Naive thymus-derived CD4-positive, alpha-beta T cell (primary cell): ENCODE measurements at regions of chr11 and their contacts with region 1.

Region 1: DNA sequence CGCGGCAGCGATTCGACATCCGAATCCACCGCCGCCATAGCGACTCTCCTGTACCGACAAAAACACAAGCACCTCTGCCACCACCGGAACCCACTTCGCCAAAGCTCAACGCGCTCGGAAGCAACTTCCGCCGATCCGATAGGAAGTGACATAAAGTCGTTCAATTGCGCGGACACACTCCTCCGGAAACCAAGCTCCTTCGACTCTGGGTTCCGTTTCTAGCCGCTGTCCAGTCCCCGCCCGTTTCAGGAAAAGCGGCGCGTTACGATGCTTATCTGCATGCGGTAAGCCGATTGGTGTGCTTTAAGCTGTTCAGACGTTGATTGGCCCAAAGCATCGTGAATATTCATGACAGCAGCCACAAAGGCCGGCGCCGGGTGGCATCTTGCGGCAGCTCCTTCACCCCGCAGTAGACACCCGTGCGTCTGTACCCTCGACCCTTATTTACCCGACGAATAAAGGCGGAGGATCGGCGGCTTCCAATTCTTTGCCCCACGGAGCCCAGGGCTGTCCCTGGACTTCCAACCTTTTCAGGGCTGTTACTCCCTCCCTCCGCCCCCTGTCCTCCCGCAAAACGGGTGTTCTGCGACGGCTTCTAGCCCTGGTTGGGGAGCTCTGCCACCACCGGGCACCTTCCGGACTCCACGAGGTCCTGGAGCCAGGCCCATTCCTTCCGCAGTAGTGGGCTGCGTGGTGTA is at the start of gene TUT1:
- DNase-seq: peak; percentile 78 to 99 (median 98)
- ATAC-seq: peak; percentile 92
- H3K4me3 ChIP-seq: peak within 1 kb of the TSS; percentile 82
- H3K4me3 Mint-ChIP-seq: peak within 1 kb of the TSS; percentile 87 to 100 (median 96)
- H3K27ac ChIP-seq: peak within 1 kb of the TSS; percentile 94
- H3K27ac Mint-ChIP-seq: peak within 1 kb of the TSS; percentile 92 to 99 (median 96)
- H3K4me1 ChIP-seq: peaks cover 14 to 35% of the 10 kb centered on the region in 2 donors
- H3K4me1 Mint-ChIP-seq: peaks cover 26 to 66% (median 52%) of the 10 kb centered on the region in 7 donors
- H3K27me3 ChIP-seq: no peaks in the 10 kb centered on the region
- H3K27me3 Mint-ChIP-seq: peaks cover 0 to 4% (median 0%) of the 10 kb centered on the region in 5 donors
- total RNA-seq, gene TUT1: 34.5 to 54.6 (median 37.4) TPM

Region 2: GRCh38 chr11:62532096-62532495 is 59.5 kb before region 1 on chr11:
- CTCF ChIA-PET with region 1: no interaction called
- POLR2A ChIA-PET with region 1: no interaction called
- intact Hi-C with region 1: no loop called
- DNase-seq: no peak
- ATAC-seq: no peak
- H3K4me3 ChIP-seq: no peak overlapping the region
- H3K4me3 Mint-ChIP-seq: no peak overlapping the region
- H3K27ac ChIP-seq: no peak overlapping the region
- H3K27ac Mint-ChIP-seq: peak overlapping the region in 1 of 9 donors; percentile 28
- H3K4me1 ChIP-seq: no peaks in the 10 kb centered on the region
- H3K4me1 Mint-ChIP-seq: peaks cover 0 to 11% (median 0%) of the 10 kb centered on the region in 7 donors
- H3K27me3 ChIP-seq: no peaks in the 10 kb centered on the region
- H3K27me3 Mint-ChIP-seq: no peaks in the 10 kb centered on the region

Region 3: DNA sequence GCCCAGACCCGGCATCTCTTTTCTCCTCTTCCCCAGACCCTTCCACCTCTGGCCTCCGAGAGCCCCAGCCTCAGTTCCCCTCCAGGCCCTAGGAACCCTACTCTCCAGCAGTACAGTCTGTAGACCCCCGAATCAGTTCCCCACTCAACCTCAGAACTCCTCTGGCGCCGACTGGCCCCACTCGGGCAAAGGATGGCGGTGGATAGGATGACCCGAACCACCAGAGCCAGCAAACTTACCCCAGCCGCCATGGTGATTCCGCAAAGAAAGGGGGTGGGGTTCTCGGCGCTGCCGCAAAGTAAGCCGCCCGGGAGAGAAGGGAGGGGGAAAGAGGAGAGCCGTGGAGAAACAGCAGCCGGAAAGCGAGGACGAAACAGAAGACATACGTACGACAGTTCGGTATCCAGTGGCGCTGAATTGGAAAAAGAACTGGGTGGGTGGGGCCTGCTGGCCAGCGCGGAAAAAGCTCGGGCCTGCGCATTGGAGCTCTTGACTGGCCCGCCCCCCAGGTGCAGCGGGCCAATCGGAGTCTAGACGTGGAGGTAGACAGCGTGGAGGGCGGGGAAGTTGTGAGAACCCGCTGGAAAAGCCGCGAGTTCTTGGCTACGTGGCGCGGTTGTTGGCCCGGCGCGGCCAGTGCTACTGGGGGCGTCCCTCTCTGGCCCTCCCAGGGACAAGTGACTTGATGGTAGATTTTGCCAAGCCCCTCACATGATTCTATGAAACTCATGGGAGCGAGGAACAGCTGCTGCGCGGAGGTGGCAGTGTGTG is 17.8 kb before region 1 on chr11 and contains the start of gene EEF1G:
- CTCF ChIA-PET with region 1: interaction called, 12 read pairs
- POLR2A ChIA-PET with region 1: interaction called, 92 read pairs
- intact Hi-C with region 1: loop called (anchors 1 kb)
- DNase-seq: peak; percentile 88 to 100 (median 99)
- ATAC-seq: peak; percentile 96
- H3K4me3 ChIP-seq: peak within 1 kb of the TSS; percentile 82
- H3K4me3 Mint-ChIP-seq: peak within 1 kb of the TSS; percentile 94 to 100 (median 97)
- H3K27ac ChIP-seq: peak within 1 kb of the TSS; percentile 88
- H3K27ac Mint-ChIP-seq: peak within 1 kb of the TSS; percentile 81 to 98 (median 95)
- H3K4me1 ChIP-seq: peaks cover 8 to 11% of the 10 kb centered on the region in 2 donors
- H3K4me1 Mint-ChIP-seq: peaks cover 39 to 61% (median 45%) of the 10 kb centered on the region in 7 donors
- H3K27me3 ChIP-seq: no peaks in the 10 kb centered on the region
- H3K27me3 Mint-ChIP-seq: no peaks in the 10 kb centered on the region
- total RNA-seq, gene EEF1G: 1,186 to 2,550 (median 2,338) TPM

Region 4: GRCh38 chr11:62645956-62646824 is 54.6 kb after region 1 on chr11 and contains the start of gene GANAB:
- CTCF ChIA-PET with region 1: interaction called, 4 read pairs
- POLR2A ChIA-PET with region 1: interaction called, 41 read pairs
- intact Hi-C with region 1: loop called (anchors 1 to 2 kb)
- DNase-seq: peak; percentile 89 to 99 (median 97)
- ATAC-seq: peak; percentile 99
- H3K4me3 ChIP-seq: peak within 1 kb of the TSS; percentile 84
- H3K4me3 Mint-ChIP-seq: peak within 1 kb of the TSS; percentile 94 to 99 (median 98)
- H3K27ac ChIP-seq: peak within 1 kb of the TSS; percentile 97
- H3K27ac Mint-ChIP-seq: peak within 1 kb of the TSS; percentile 92 to 98 (median 96)
- H3K4me1 ChIP-seq: peaks cover 6 to 25% of the 10 kb centered on the region in 2 donors
- H3K4me1 Mint-ChIP-seq: peaks cover 6 to 44% (median 37%) of the 10 kb centered on the region in 7 donors
- H3K27me3 ChIP-seq: no peaks in the 10 kb centered on the region
- H3K27me3 Mint-ChIP-seq: no peaks in the 10 kb centered on the region
- total RNA-seq, gene GANAB: 203 to 313 (median 286) TPM

Region 5: DNA sequence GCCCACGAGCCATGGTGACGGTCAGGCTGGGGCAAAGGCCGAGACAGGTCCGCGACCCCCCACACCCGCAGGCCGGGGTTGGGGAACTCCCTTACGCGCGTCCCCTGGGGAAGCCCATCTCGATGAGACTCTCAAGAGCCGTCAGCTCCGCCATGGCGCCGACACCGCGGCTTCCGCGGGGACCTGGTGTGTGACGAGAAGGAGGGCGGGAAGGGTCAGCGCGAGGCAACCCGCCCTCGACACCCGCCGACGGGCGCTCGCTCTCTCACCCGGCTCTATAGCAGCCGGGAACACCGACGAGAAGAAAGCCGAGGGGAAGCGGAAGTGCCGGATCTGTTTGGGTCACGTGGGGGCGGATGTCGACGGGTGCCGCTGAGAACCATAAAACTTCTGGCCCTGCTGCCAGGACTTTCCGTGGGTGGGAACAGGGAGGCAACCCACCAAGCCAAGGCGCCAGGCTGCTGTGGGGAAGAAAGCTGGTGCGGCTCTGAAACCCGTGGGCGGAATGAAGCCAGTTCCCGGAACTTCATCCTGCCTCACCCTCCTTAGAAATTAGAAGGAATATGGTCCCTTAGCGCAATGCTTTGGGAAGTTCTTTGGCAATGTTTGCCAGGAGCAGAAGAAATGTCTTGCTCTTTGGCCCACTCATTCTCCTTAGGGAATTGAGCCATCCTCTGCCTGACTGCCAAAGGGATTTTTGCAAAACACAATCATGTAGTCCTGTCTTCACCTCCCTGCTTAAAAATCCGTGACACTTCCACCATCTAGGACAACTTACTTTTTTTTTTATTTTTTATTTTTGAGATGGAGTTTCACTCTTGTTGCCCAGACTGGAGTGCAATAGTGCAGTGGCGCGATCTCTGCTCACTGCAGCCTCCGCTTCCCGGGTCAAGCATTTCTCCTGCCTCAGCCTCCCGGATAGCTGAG is 87.4 kb after region 1 on chr11 and contains the start of gene UBXN1:
- CTCF ChIA-PET with region 1: interaction called, 14 read pairs
- POLR2A ChIA-PET with region 1: interaction called, 269 read pairs
- intact Hi-C with region 1: loop called (anchors 1 kb)
- DNase-seq: peak; percentile 63 to 84 (median 81)
- ATAC-seq: peak; percentile 91
- H3K4me3 ChIP-seq: peak within 1 kb of the TSS; percentile 87
- H3K4me3 Mint-ChIP-seq: peak within 1 kb of the TSS; percentile 86 to 93 (median 90)
- H3K27ac ChIP-seq: peak within 1 kb of the TSS; percentile 98
- H3K27ac Mint-ChIP-seq: peak within 1 kb of the TSS; percentile 88 to 98 (median 94)
- H3K4me1 ChIP-seq: peaks cover 13 to 15% of the 10 kb centered on the region in 2 donors
- H3K4me1 Mint-ChIP-seq: peaks cover 19 to 41% (median 37%) of the 10 kb centered on the region in 7 donors
- H3K27me3 ChIP-seq: no peaks in the 10 kb centered on the region
- H3K27me3 Mint-ChIP-seq: no peaks in the 10 kb centered on the region
- total RNA-seq, gene UBXN1: 114 to 215 (median 207) TPM

Region 6: DNA sequence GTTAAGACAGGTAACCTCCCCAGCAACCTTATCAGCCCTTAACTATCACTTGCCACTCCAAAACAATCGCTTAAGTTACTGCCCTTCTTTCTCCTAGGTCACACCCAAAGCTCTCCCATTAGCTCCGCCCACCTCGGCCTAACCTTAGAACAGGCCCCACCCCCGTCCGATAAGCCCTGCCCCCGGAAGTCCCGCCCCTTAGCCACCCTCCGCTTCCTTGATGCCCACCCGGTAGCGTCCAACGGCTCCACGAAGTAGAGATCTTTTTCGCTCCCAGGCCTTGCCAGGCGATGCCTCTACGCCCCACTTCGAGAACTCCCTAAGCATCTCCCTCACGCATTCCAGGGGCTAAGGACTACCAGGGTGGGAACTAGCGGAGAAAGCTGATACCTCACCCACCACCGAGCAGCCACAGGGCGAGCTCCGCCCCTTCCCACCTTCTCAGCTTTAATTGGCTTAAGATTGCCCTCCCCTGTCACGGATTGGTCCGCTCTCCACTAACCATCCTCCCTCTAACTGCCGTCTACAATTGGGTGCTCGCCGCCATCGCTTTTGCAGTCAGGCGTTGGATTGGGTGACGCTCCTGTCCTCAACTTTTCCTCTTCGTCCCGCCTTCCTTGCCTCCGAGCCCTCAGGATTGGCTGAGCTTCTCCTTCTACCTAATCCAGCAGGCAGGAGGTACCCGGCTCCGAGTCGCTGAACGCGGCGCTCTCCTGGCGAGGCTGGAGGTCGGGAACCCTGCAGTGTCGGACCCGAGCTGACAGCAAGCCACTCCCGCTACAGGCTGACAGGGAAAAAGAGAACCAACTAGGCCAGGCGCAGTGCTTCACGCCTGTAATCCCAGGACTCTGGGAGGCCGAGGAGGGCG is 162.4 kb after region 1 on chr11 and contains the start of gene ZBTB3:
- CTCF ChIA-PET with region 1: interaction called, 3 read pairs
- POLR2A ChIA-PET with region 1: interaction called, 35 read pairs
- intact Hi-C with region 1: loop called in 1 of 2 experiments (anchors 1 kb)
- DNase-seq: peak; percentile 89 to 99 (median 98)
- ATAC-seq: peak; percentile 96
- H3K4me3 ChIP-seq: peak within 1 kb of the TSS; percentile 94
- H3K4me3 Mint-ChIP-seq: peak within 1 kb of the TSS; percentile 86 to 100 (median 98)
- H3K27ac ChIP-seq: peak within 1 kb of the TSS; percentile 83
- H3K27ac Mint-ChIP-seq: peak within 1 kb of the TSS; percentile 93 to 99 (median 95)
- H3K4me1 ChIP-seq: peaks cover 15 to 16% of the 10 kb centered on the region in 2 donors
- H3K4me1 Mint-ChIP-seq: peaks cover 9 to 41% (median 29%) of the 10 kb centered on the region in 7 donors
- H3K27me3 ChIP-seq: no peaks in the 10 kb centered on the region
- H3K27me3 Mint-ChIP-seq: no peaks in the 10 kb centered on the region
- total RNA-seq, gene ZBTB3: 6.4 to 24.1 (median 19.0) TPM

Region 7: GRCh38 chr11:62841361-62842184 is 250.0 kb after region 1 on chr11:
- CTCF ChIA-PET with region 1: no interaction called
- POLR2A ChIA-PET with region 1: interaction called, 50 read pairs
- intact Hi-C with region 1: no loop called
- DNase-seq: peak; percentile 68 to 94 (median 88)
- ATAC-seq: peak; percentile 71
- H3K4me3 ChIP-seq: peak overlapping the region; percentile 73
- H3K4me3 Mint-ChIP-seq: no peak overlapping the region
- H3K27ac ChIP-seq: peak overlapping the region; percentile 99
- H3K27ac Mint-ChIP-seq: no peak overlapping the region
- H3K4me1 ChIP-seq: peaks cover 9 to 22% of the 10 kb centered on the region in 2 donors
- H3K4me1 Mint-ChIP-seq: peaks cover 15 to 31% (median 26%) of the 10 kb centered on the region in 7 donors
- H3K27me3 ChIP-seq: no peaks in the 10 kb centered on the region
- H3K27me3 Mint-ChIP-seq: peaks cover 0 to 6% (median 0%) of the 10 kb centered on the region in 5 donors